Heart left ventricle (tissue), 16 donors: ENCODE measurements at regions of chr1 and their contacts with region 1.

Region 1: DNA sequence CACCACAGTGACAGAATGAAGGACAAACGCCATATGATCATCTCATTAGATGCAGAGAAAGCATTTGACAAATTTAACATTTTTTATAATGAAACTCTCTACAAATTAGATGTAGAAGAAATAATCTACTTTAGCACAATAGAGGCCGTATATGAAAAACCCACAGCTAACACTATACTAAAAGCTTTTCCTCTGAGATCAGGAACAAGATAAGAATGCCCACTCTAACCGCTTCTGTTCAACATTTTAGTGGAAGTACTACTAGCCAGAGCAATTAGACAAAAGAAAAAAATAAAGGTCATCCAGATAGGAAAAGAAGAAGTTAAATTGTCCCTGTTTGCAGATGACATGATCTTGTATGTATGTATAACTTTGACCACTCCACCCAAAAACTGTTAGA is 109.7 kb downstream of the SLC35F3 start:
- DNase-seq: no peak
- ATAC-seq: no peak
- H3K4me3 ChIP-seq: no peak overlapping the region
- H3K27ac ChIP-seq: no peak overlapping the region
- H3K4me1 ChIP-seq: no peaks in the 10 kb centered on the region
- H3K27me3 ChIP-seq: peaks cover 0 to 8% (median 0%) of the 10 kb centered on the region in 9 donors
- CTCF ChIP-seq: no peak
- POLR2A ChIP-seq: no peak

Region 2: DNA sequence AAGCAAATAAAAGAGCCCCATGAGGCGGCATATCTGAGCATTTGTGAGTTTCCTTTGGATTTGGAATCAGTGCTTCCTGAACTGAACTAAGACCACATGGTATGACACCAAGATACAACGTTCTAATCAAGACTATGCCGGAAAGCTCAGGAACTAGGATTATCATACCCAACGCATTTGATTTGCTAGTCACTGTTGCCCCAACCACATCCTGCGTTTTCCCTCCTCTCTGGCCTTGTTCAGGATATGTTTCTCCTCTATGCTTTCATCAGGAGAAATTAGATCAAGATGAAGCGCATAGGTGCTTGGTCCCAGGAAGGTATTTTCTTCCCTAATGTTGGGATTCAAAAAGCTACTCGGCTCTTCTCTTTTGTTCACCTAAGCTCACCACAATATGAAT is 30.4 kb before region 1 on chr1:
- intact Hi-C with region 1: loop called in 1 of 10 experiments (anchors 1 kb)
- DNase-seq: no peak
- ATAC-seq: no peak
- H3K4me3 ChIP-seq: no peak overlapping the region
- H3K27ac ChIP-seq: no peak overlapping the region
- H3K4me1 ChIP-seq: no peaks in the 10 kb centered on the region
- H3K27me3 ChIP-seq: peaks cover 0 to 14% (median 0%) of the 10 kb centered on the region in 9 donors
- CTCF ChIP-seq: no peak
- POLR2A ChIP-seq: no peak